Activated naive CD4-positive, alpha-beta T cell treated with anti-CD3 and anti-CD28 coated beads for 36 hours (primary cell): ENCODE measurements at regions of chr5 and their contacts with region 1.

Region 1: DNA sequence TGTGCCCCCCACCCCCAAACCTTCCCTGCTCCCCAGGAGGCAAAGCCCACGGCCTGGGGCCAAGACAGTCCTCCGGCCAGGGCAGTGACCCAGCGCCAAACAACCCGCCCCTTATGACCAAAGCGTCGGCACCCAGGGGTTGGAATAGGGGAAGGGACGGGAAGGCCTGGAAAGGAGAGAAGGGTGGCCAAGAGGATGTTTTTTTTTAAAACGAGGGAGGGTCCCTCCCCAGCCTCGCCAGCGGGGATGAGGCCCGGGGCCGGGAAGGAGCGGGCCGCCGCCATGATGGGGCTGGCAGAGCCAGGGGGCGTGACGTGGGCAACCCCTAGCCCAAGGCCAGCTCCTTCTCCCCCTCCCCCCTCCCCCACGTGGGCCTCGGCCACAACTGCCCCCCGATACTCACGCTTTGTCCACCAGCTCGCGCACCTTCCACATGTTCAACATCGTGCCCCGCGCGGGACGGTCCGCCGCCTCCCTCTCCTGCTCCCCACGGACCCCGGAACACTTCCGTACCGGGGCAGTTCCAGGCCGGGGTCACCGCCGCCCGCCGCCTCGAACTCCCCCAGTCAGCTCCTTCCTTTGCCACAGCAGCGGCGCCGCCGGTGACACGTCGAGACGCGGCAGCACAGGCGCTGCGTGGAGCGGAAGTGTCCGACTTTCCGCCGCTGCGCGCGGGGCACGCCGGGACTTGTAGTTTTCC is at the start of gene CLINT1:
- DNase-seq: peak; percentile 90
- H3K4me3 Mint-ChIP-seq: peak within 1 kb of the TSS; percentile 86
- H3K27ac Mint-ChIP-seq: peak within 1 kb of the TSS; percentile 87
- H3K4me1 Mint-ChIP-seq: peaks cover 70% of the 10 kb centered on the region
- H3K27me3 Mint-ChIP-seq: no peaks in the 10 kb centered on the region
- total RNA-seq, gene CLINT1: 31.0 to 32.7 TPM

Region 2: DNA sequence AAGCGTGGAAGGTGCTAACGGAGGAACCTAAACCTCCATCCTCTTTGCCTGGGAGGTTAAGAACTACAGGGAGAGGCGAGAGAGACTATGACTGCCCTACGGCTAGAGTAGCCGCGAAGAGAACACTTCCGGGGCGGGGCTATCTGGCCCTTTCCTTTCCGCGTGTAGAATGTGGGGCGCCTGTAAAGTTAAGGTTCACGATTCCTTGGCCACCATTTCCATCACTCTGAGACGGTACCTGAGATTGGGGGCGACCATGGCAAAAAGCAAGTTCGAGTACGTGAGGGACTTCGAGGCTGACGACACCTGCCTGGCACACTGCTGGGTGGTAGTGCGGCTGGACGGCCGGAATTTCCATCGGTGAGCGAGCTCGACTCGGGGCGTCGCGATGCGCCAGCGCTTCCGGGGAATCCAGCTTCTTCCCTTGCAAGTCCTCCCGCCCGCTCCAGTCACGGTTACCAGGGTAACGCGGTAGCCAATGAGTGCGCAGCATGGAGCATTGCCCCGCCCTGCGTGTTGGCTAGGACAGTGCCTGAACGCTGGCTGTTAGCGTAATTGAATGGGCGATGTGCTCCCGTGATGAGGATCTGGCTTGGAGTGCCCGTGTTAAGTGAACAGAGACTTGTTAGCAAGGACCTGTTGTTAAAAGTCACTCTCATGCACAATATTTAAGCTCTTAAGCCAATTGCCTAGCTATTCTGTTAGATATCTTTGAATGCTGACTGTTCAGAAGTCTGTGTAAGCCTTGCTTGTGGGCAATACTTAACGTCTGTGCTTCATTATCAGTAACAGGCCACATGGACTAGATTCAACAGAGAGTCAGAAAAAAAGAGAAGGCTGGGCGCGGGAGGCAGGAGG is 127.2 kb before region 1 on chr5 and contains the start of gene THG1L:
- CTCF ChIA-PET with region 1: no interaction called
- intact Hi-C with region 1: loop called (anchors 1 kb)
- DNase-seq: peak; percentile 100
- H3K4me3 Mint-ChIP-seq: peak within 1 kb of the TSS; percentile 97
- H3K27ac Mint-ChIP-seq: peak within 1 kb of the TSS; percentile 95
- H3K4me1 Mint-ChIP-seq: peaks cover 25% of the 10 kb centered on the region
- H3K27me3 Mint-ChIP-seq: no peaks in the 10 kb centered on the region
- total RNA-seq, gene THG1L: 28.1 to 30.2 TPM

Region 3: GRCh38 chr5:157870837-157871834 is 12.5 kb after region 1 on chr5:
- CTCF ChIA-PET with region 1: interaction called, 5 read pairs
- intact Hi-C with region 1: loop called (anchors 1 kb)
- DNase-seq: no peak
- H3K4me3 Mint-ChIP-seq: no peak overlapping the region
- H3K27ac Mint-ChIP-seq: peak overlapping the region; percentile 32
- H3K4me1 Mint-ChIP-seq: peaks cover 15% of the 10 kb centered on the region
- H3K27me3 Mint-ChIP-seq: no peaks in the 10 kb centered on the region

Region 4: DNA sequence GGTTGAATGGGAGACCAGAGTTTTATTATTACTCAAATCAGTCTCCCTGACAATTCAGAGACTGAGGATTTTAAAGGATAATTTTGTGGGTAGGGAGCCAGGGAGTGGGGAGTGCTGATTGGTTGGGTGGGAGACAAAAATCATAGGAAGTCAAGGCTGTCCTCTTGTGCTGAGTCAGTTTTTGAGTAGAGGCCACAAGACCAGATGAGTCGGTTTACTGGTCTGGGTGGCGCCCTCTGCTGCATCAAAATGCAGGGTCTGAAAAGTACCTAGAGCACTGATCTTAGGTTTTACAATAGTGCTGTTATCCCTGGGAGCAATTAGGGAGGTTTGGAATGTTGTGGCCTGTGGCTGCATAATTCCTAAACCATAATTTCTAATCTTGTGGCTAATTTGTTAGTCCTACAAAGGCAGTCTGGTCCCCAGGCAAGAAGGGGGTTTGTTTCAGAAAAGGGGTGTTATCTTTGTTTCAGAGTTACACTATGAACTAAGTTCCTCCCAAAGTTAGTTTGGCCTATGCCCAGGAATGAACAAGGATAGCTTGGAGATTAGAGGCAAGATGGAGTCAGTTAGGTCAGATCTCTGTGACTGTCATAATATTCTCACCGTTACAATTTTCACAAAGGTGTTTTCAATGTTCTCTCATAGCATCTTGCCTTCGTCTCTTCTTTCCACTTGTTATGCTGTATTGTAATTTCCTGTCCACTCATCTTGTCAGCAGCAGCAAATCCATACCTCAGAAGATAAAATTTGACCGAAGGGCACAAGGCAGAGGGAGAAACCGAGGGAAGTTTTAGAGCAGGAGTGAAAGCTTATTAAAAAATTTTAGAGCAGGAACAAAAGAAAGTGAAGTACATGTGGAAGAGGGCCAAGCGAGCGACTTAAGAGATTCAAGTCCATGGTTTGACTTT is 59.5 kb after region 1 on chr5:
- CTCF ChIA-PET with region 1: interaction called, 5 read pairs
- intact Hi-C with region 1: loop called (anchors 1 kb)
- DNase-seq: peak; percentile 88
- H3K4me3 Mint-ChIP-seq: no peak overlapping the region
- H3K27ac Mint-ChIP-seq: no peak overlapping the region
- H3K4me1 Mint-ChIP-seq: peaks cover 22% of the 10 kb centered on the region
- H3K27me3 Mint-ChIP-seq: no peaks in the 10 kb centered on the region

Region 5: DNA sequence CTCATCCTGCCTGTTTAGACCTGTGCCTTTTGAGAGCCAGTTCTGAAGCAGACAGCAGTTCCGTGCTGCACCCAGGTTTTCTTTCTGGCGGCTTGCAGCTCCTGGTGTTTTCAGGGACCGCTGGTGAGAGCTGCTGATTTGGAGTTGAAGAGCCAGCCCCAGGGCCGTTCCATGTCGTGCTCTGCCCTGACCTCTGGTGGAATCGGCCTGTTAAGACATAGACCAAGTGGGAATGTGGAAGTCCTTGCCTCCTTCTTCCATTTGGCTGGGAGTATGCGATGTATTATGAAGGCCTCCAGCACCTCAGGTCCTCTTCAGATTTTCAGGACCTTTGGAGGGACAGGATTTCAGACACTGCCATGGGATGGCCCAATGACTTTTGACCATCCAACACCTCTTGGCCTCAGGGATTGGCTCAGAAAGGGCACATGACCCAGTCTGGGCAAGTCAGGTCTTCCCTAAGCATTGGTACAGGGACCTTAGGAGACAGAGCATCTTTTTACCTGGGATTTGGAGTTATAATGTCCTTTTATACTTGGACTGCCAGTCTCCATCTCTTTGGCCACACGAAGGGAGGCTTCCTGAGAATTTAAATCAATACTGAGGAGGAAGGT is 136.3 kb after region 1 on chr5:
- CTCF ChIA-PET with region 1: no interaction called
- intact Hi-C with region 1: loop called (anchors 1 kb)
- DNase-seq: peak; percentile 64
- H3K4me3 Mint-ChIP-seq: no peak overlapping the region
- H3K27ac Mint-ChIP-seq: no peak overlapping the region
- H3K4me1 Mint-ChIP-seq: peaks cover 11% of the 10 kb centered on the region
- H3K27me3 Mint-ChIP-seq: peaks cover 22% of the 10 kb centered on the region

Region 6: DNA sequence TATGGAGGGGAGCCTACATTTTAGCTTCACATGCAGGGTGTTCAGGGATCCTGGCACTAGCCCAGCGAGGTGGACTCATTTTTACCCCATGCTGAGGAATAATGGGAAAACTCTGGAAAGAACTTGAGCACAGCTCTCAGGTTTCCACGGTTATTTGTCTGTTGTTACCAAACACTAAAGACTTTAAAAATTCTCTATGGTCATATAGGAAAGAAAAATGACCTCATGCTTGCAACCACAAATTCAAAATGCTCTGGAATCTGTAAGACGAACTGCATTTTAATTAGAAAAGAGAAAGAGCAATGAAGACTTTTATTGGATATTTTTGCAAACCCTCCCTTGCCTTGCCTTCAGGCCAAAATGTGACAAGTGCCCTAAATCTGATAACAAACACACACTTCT is 634.2 kb after region 1 on chr5:
- CTCF ChIA-PET with region 1: no interaction called
- intact Hi-C with region 1: no loop called
- DNase-seq: no peak
- H3K4me3 Mint-ChIP-seq: no peak overlapping the region
- H3K27ac Mint-ChIP-seq: no peak overlapping the region
- H3K4me1 Mint-ChIP-seq: no peaks in the 10 kb centered on the region
- H3K27me3 Mint-ChIP-seq: no peaks in the 10 kb centered on the region

Region 7: DNA sequence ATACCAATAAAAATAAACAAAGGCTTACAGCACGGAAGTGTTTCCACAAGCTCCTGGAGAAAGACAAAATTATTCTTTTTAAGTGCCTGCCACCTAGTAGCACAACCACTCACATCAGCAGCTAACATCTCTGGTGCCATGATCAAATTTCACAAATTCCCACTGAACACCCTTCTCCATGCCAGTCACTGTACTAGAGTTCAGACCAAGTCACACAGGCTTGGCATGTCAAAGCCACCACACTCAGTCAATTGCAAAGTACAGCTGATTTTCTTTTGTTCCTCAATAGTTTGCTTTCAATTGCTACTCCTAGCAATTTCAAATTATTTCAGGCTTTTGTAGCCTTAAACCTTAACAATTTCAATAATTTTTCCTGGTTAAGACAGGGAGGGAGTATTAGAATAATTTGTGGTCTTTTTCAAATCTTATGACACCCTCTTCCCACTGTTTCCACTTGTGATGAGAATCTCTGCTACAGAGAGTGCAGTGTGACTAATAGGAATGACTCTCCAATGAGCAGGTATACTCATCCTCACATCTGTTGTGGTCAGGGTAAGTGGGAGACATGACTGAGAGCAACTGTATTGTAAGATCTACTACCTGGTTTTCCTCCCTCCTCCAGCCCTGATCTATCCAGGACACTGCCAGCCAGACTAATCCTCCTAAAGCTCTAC is 1304.5 kb after region 1 on chr5:
- CTCF ChIA-PET with region 1: no interaction called
- intact Hi-C with region 1: loop called (anchors 10 kb)
- DNase-seq: peak; percentile 41
- H3K4me3 Mint-ChIP-seq: no peak overlapping the region
- H3K27ac Mint-ChIP-seq: peak overlapping the region; percentile 32
- H3K4me1 Mint-ChIP-seq: peaks cover 47% of the 10 kb centered on the region
- H3K27me3 Mint-ChIP-seq: no peaks in the 10 kb centered on the region